Left ventricle myocardium inferior (tissue), 1 donor: ENCODE measurements at regions of chr17 and their contacts with region 1.

Region 1: GRCh38 chr17:77429919-77430752 is 289.4 kb downstream of the SEC14L1 start:
- DNase-seq: peak; percentile 91
- H3K4me3 ChIP-seq: no peak overlapping the region
- H3K27ac ChIP-seq: peak overlapping the region; percentile 85
- H3K4me1 ChIP-seq: peaks cover 98% of the 10 kb centered on the region
- H3K27me3 ChIP-seq: no peaks in the 10 kb centered on the region
- CTCF ChIP-seq: peak; percentile 86

Region 2: GRCh38 chr17:77235370-77235941 is 194.7 kb before region 1 on chr17:
- intact Hi-C with region 1: no loop called
- DNase-seq: peak; percentile 45
- H3K4me3 ChIP-seq: peak overlapping the region; percentile 49
- H3K27ac ChIP-seq: peak overlapping the region; percentile 76
- H3K4me1 ChIP-seq: peaks cover 26% of the 10 kb centered on the region
- H3K27me3 ChIP-seq: no peaks in the 10 kb centered on the region
- CTCF ChIP-seq: no peak

Region 3: DNA sequence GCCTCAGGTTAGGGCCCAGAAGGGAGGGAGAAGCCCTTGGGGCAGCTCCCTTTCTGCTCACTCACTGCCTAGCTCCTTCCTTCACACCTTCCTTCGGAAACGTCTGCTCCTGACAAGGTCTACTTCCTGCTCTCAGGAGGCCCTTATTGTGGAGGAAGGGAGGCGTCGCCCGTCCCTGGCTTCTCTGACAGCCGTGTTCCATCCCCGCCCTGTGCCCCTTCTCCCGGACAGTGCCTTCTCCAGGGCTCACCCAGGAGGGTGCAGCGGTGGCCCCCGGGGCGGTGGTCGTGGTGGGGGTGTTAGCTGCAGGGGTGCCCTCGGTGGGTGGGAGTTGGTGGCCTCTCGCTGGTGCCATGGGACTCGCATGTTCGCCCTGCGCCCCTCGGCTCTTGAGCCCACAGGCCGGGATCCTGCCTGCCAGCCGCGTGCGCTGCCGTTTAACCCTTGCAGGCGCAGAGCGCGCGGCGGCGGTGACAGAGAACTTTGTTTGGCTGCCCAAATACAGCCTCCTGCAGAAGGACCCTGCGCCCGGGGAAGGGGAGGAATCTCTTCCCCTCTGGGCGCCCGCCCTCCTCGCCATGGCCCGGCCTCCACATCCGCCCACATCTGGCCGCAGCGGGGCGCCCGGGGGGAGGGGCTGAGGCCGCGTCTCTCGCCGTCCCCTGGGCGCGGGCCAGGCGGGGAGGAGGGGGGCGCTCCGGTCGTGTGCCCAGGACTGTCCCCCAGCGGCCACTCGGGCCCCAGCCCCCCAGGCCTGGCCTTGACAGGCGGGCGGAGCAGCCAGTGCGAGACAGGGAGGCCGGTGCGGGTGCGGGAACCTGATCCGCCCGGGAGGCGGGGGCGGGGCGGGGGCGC is 57.5 kb before region 1 on chr17:
- intact Hi-C with region 1: no loop called
- DNase-seq: peak; percentile 91
- H3K4me3 ChIP-seq: peak overlapping the region; percentile 98
- H3K27ac ChIP-seq: peak overlapping the region; percentile 98
- H3K4me1 ChIP-seq: peaks cover 83% of the 10 kb centered on the region
- H3K27me3 ChIP-seq: no peaks in the 10 kb centered on the region
- CTCF ChIP-seq: peak; percentile 22

Region 4: GRCh38 chr17:77391668-77392375 is 38.3 kb before region 1 on chr17:
- intact Hi-C with region 1: no loop called
- DNase-seq: peak; percentile 57
- H3K4me3 ChIP-seq: peak overlapping the region; percentile 18
- H3K27ac ChIP-seq: peak overlapping the region; percentile 90
- H3K4me1 ChIP-seq: peaks cover 97% of the 10 kb centered on the region
- H3K27me3 ChIP-seq: no peaks in the 10 kb centered on the region
- CTCF ChIP-seq: no peak

Region 5: DNA sequence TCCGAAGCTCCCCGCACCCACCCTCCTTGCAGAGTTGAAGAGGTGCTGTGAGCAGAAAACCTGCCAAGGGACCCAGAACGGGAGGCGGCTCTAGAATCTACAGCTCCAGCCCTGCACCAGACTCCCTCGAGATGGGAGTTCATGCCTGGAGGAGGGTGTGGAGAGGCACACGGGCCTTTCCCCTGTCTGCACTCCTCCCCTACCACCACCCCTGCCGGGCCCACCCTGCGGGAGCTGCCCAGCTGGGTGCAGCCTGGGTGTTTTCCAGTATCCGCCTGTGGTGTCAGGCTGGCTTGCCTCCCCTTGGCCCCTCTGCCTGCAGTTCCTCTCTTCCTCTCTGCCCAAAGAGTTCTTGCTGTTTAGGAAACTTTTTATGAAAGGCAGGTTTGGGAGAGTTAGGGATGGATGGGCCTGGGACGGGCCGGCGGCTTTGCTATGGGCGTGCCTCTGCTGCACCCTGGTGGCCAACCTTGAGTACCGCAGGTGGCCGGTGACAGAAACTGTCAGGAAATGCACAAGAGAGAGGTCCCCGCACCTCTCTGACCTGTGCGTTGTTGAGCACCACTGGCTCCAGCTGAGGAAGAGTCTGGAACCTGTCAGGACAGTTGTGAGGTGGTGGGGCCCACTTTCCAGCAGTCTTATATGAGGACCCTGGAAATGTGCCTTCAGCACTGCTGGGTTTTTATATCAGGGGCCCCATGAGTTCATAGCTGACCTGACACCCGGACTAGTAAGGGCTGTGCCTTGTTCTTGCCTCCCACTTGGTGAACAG is 64.7 kb after region 1 on chr17:
- intact Hi-C with region 1: loop called (anchors 5 kb)
- DNase-seq: peak; percentile 77
- H3K4me3 ChIP-seq: no peak overlapping the region
- H3K27ac ChIP-seq: peak overlapping the region; percentile 21
- H3K4me1 ChIP-seq: peaks cover 25% of the 10 kb centered on the region
- H3K27me3 ChIP-seq: no peaks in the 10 kb centered on the region
- CTCF ChIP-seq: peak; percentile 99

Region 6: DNA sequence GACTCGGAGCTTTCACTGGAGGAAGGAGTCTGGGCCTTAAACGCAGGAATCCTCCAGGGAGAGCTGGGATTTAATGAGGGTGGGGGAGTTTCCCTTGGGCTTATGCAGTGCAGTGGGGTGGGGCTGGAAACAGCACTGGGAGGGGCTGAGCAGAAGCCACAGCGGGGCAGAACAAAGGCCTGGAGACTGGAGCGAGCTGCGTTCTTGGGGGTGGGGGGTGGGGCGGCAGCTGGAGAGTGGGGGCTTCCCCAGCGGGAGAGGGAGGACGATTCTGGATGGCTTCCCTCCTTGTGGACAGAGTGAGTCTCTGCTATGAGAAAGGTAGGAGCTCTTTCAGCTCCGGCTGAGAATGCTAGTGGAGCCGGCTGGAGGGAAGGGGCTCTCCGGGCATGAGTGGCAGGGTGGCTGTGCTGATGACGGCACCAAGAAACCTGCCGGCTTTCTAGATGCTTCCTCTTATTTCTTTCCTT is 116.7 kb after region 1 on chr17:
- intact Hi-C with region 1: no loop called
- DNase-seq: no peak
- H3K4me3 ChIP-seq: peak overlapping the region; percentile 34
- H3K27ac ChIP-seq: no peak overlapping the region
- H3K4me1 ChIP-seq: peaks cover 17% of the 10 kb centered on the region
- H3K27me3 ChIP-seq: peaks cover 5% of the 10 kb centered on the region
- CTCF ChIP-seq: no peak